Activated T-helper 2 cell treated with anti-CD3 and anti-CD28 coated beads, Interferon-gamma antibody, Interleukin-2, Interleukin-4, amounts not matched to agents 10 μg/mL and 5 μg/mL and 100 μg/mL, durations not matched to agents 14 hours and 24 hours and 36 hours (primary cell): ENCODE measurements at regions of chr2 and their contacts with region 1.

Region 1: GRCh38 chr2:84970868-84971509 is at the start of gene KCMF1:
- DNase-seq: peak; percentile 70
- H3K4me3 Mint-ChIP-seq: peak within 1 kb of the TSS; percentile 100
- H3K27ac Mint-ChIP-seq: peak within 1 kb of the TSS; percentile 100
- H3K4me1 Mint-ChIP-seq: peaks cover 39% of the 10 kb centered on the region
- H3K27me3 Mint-ChIP-seq: no peaks in the 10 kb centered on the region
- total RNA-seq, gene KCMF1: 82.6 and 86.3 TPM in 2 replicates

Region 2: GRCh38 chr2:84905181-84906107 is 65.5 kb before region 1 on chr2 and contains the start of gene TMSB10:
- intact Hi-C with region 1: loop called (anchors 2 kb)
- DNase-seq: peak; percentile 90
- H3K4me3 Mint-ChIP-seq: peak within 1 kb of the TSS; percentile 83
- H3K27ac Mint-ChIP-seq: peak within 1 kb of the TSS; percentile 76
- H3K4me1 Mint-ChIP-seq: peaks cover 46% of the 10 kb centered on the region
- H3K27me3 Mint-ChIP-seq: no peaks in the 10 kb centered on the region
- total RNA-seq, gene TMSB10: 2,676 and 2,847 TPM in 2 replicates

Region 3: DNA sequence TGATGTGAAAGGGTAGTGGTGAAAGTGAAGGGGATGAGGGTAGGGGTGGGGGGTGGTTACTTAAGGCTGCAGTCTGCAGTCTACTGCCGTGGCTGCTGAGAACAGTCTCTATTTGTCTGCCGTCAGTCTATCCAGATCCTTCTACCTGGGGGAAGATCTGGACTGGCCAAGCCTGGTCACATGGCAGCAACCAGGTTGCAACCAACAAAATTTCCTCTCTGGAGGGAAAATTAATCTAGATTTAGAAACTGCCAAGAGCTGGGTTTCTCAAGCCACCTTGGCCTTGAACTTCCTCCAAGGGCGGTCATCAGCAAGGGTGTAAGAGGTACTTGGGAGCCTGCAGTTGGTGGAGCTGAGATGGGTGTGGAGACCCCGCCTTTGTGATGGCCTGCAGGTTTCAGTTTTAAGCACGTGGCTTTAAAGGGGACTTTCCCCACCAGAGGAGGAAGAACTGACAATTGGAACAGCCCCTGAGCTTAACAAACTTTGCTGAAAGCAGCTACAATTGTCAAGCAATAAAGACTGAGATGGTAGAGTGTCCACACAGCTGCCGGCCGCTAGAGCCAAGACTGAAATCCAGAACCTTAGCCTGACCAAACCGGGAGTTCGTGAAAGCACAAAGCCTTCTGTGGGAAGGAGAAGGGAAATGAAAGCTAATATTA is 31.4 kb before region 1 on chr2:
- intact Hi-C with region 1: loop called (anchors 1 kb)
- DNase-seq: peak; percentile 85
- H3K4me3 Mint-ChIP-seq: peak overlapping the region; percentile 72
- H3K27ac Mint-ChIP-seq: peak overlapping the region; percentile 98
- H3K4me1 Mint-ChIP-seq: peaks cover 50% of the 10 kb centered on the region
- H3K27me3 Mint-ChIP-seq: no peaks in the 10 kb centered on the region

Region 4: GRCh38 chr2:84946204-84947009 is 24.6 kb before region 1 on chr2:
- intact Hi-C with region 1: loop called (anchors 1 kb)
- DNase-seq: peak; percentile 50
- H3K4me3 Mint-ChIP-seq: peak overlapping the region; percentile 62
- H3K27ac Mint-ChIP-seq: peak overlapping the region; percentile 92
- H3K4me1 Mint-ChIP-seq: peaks cover 38% of the 10 kb centered on the region
- H3K27me3 Mint-ChIP-seq: no peaks in the 10 kb centered on the region

Region 5: GRCh38 chr2:85002534-85002933 is 31.5 kb after region 1 on chr2:
- intact Hi-C with region 1: loop called (anchors 2 kb)
- DNase-seq: no peak
- H3K4me3 Mint-ChIP-seq: no peak overlapping the region
- H3K27ac Mint-ChIP-seq: no peak overlapping the region
- H3K4me1 Mint-ChIP-seq: peaks cover 38% of the 10 kb centered on the region
- H3K27me3 Mint-ChIP-seq: no peaks in the 10 kb centered on the region

Region 6: GRCh38 chr2:85015653-85016360 is 44.8 kb after region 1 on chr2:
- intact Hi-C with region 1: loop called (anchors 2 kb)
- DNase-seq: no peak
- H3K4me3 Mint-ChIP-seq: no peak overlapping the region
- H3K27ac Mint-ChIP-seq: peak overlapping the region; percentile 61
- H3K4me1 Mint-ChIP-seq: peaks cover 52% of the 10 kb centered on the region
- H3K27me3 Mint-ChIP-seq: no peaks in the 10 kb centered on the region

Region 7: DNA sequence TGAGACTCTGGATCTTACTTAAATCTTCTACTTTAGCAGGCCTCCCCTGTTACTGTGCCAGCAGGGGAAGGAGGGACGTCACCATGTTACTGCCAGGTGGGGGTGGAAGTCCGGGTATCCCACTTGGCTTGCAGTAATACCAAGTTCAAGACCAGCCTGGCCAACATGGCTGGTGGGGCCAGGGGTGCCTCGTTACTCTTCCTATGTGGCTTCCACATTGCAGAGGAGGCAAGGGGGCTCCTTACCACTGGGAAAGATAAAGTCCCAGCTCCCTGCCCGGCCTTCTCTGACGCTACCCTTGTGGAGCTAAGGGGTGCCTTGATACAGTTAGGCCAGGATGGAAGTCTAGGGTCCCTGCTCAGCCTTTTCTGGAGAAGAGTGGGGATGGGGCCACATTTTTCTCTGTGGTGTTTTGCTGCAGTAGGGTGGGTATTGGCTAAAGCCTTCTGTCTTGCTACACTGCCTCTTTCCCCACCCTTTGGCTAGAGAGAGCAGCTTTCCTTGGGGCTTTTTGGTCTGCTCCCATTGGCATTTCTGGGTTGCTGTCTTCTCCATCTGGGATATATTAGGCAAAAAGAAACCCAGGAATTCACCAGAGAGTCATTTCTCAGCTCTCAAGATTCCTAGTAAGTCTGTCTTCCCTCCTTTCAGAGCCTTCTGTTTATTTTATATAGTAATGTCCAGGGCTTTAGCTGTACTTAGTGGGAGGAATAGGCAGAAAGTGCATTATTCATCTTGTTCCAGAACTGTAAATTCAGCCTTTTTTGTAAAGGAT is 405.5 kb after region 1 on chr2:
- intact Hi-C with region 1: no loop called
- DNase-seq: no peak
- H3K4me3 Mint-ChIP-seq: no peak overlapping the region
- H3K27ac Mint-ChIP-seq: no peak overlapping the region
- H3K4me1 Mint-ChIP-seq: no peaks in the 10 kb centered on the region
- H3K27me3 Mint-ChIP-seq: no peaks in the 10 kb centered on the region